GM12878 (cell line): ENCODE measurements at regions of chr7 and their contacts with region 1.

Region 1: GRCh38 chr7:7595451-7595850 is 28.8 kb downstream of the MIOS start:
- DNase-seq: no peak
- ATAC-seq: peak; percentile 60
- H3K4me3 ChIP-seq: no peak overlapping the region
- H3K27ac ChIP-seq: no peak overlapping the region
- H3K4me1 ChIP-seq: no peaks in the 10 kb centered on the region
- H3K27me3 ChIP-seq: no peaks in the 10 kb centered on the region
- CTCF ChIP-seq: peak in 1 of 3 experiments; percentile 13; a peak in 1 of 6 replicates
- EP300 ChIP-seq: no peak
- POLR2A ChIP-seq: no peak
- RAD21 ChIP-seq: peak; percentile 29; the same call in 1 of the 2 replicates

Region 2: DNA sequence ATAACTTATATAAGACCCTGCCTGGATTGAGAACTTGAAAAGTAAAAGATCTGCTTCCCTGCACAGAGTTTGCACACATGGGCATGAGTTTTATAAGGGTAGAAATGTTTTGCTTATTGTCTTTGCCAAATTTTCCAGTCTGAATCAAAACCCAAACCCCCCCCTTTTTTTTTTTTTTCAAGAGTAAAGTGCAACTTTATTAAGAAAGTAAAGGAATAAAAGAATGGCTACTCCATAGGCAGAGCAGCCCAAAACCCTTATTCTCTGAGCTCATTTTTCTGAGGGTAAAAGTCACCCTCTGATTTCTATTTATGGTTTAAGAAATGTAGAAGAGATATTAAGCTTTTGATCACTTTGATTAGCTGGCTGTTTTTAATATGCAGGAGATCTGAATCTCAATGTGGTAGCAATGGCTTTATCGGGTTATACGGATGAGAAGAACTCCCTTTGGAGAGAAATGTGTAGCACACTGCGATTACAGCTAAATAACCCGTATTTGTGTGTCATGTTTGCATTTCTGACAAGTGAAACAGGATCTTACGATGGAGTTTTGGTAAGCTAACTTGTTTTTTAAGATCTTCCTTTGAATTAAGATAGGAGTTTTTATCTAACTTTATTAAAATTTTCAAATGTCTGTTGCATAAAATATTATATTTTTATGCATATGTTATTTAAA is 10.1 kb before region 1 on chr7:
- CTCF ChIA-PET with region 1: interaction called, 20 read pairs
- POLR2A ChIA-PET with region 1: no interaction called
- RAD21 ChIA-PET with region 1: interaction called, 4 read pairs
- SMC1A ChIA-PET with region 1: interaction called, 8 read pairs
- in situ Hi-C with region 1: no loop called
- intact Hi-C with region 1: no loop called
- DNase-seq: no peak
- ATAC-seq: no peak
- H3K4me3 ChIP-seq: no peak overlapping the region
- H3K27ac ChIP-seq: no peak overlapping the region
- H3K4me1 ChIP-seq: no peaks in the 10 kb centered on the region
- H3K27me3 ChIP-seq: no peaks in the 10 kb centered on the region
- CTCF ChIP-seq: no peak
- EP300 ChIP-seq: no peak
- POLR2A ChIP-seq: no peak
- RAD21 ChIP-seq: no peak

Region 3: DNA sequence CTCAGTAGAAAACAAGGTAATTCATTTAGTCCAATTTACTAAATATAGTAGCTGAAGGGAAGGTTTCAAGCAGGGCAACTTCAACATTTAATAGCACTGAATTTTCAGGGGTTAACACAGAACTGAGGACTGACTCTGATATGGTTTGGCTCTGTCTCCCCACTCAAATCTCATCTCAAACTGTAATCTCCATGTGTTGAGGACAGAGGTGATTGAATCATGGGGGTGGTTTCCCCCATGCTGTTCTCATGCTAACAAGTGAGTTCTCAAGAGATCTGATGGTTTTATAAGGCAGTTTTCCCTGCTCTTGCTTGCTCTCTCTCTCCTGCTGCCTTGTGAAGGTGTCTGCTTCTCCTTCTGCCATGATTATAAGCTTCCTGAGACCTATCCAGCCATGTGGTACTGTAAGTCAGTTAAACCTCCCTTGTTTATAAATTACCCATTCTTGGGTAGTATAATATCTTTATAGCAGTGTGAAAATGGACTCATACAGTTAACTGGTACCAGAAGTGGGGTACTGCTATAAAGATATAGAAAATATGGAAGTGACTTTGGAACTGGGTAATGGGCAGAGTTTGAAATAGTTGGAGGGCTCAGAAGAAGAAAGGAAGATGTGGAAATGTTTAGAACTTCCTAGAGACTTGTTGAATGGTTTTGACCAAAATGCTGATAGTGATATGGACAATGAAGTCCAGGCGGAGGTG is 35.3 kb after region 1 on chr7:
- CTCF ChIA-PET with region 1: no interaction called
- POLR2A ChIA-PET with region 1: no interaction called
- RAD21 ChIA-PET with region 1: no interaction called
- SMC1A ChIA-PET with region 1: no interaction called
- in situ Hi-C with region 1: no loop called
- intact Hi-C with region 1: no loop called
- DNase-seq: no peak
- ATAC-seq: no peak
- H3K4me3 ChIP-seq: no peak overlapping the region
- H3K27ac ChIP-seq: no peak overlapping the region
- H3K4me1 ChIP-seq: no peaks in the 10 kb centered on the region
- H3K27me3 ChIP-seq: no peaks in the 10 kb centered on the region
- CTCF ChIP-seq: no peak
- EP300 ChIP-seq: no peak
- POLR2A ChIP-seq: no peak
- RAD21 ChIP-seq: no peak

Region 4: DNA sequence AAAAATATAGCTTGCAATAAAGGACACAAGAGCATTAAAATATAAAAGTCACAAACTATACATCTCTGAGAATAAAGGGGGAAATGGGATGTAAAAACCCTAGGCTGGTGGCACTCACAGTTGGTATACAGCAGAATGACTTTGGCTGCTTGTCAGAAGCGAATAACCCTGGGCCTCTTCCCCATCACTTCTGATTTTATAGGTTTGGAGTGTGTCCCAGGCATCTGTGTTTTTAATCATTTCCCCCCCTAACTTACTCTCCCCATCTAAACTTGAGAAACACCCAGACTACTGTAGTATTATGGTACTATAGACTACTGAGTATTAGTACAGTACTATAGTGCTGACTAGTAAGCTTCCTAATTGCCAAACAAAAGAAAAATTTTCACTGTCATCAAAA is 124.7 kb after region 1 on chr7:
- CTCF ChIA-PET with region 1: no interaction called
- POLR2A ChIA-PET with region 1: no interaction called
- RAD21 ChIA-PET with region 1: no interaction called
- SMC1A ChIA-PET with region 1: no interaction called
- in situ Hi-C with region 1: no loop called
- intact Hi-C with region 1: no loop called
- DNase-seq: no peak
- ATAC-seq: no peak; the same call in 1 of the 3 replicates
- H3K4me3 ChIP-seq: no peak overlapping the region
- H3K27ac ChIP-seq: no peak overlapping the region
- H3K4me1 ChIP-seq: peaks cover 20% of the 10 kb centered on the region; the same call in 1 of the 2 replicates
- H3K27me3 ChIP-seq: no peaks in the 10 kb centered on the region
- CTCF ChIP-seq: no peak
- EP300 ChIP-seq: no peak
- POLR2A ChIP-seq: no peak
- RAD21 ChIP-seq: no peak

Region 5: GRCh38 chr7:8236780-8237407 is 641.4 kb after region 1 on chr7:
- CTCF ChIA-PET with region 1: interaction called, 3 read pairs
- POLR2A ChIA-PET with region 1: interaction called, 12 read pairs
- RAD21 ChIA-PET with region 1: no interaction called
- SMC1A ChIA-PET with region 1: no interaction called
- in situ Hi-C with region 1: no loop called
- intact Hi-C with region 1: no loop called
- DNase-seq: no peak
- ATAC-seq: no peak
- H3K4me3 ChIP-seq: no peak overlapping the region
- H3K27ac ChIP-seq: no peak overlapping the region
- H3K4me1 ChIP-seq: no peaks in the 10 kb centered on the region
- H3K27me3 ChIP-seq: no peaks in the 10 kb centered on the region; a peak in 1 of 4 replicates
- CTCF ChIP-seq: no peak
- EP300 ChIP-seq: no peak
- POLR2A ChIP-seq: no peak
- RAD21 ChIP-seq: no peak